ENCODE measurements at regions of chr1 and their contacts with region 1.

Region 1: GRCh38 chr1:94679336-94680038 is 137.9 kb upstream of the F3 start:
- DNase-seq: no peak
- H3K4me3 ChIP-seq: no peak overlapping the region
- CTCF ChIP-seq: no peak

Region 2: GRCh38 chr1:94589728-94590127 is 89.8 kb before region 1 on chr1:
- in situ Hi-C with region 1: loop called (anchors 5 kb)
- DNase-seq: no peak
- H3K4me3 ChIP-seq: no peak overlapping the region
- CTCF ChIP-seq: no peak

Region 3: GRCh38 chr1:94600556-94600955 is 78.9 kb before region 1 on chr1:
- in situ Hi-C with region 1: no loop called
- DNase-seq: no peak
- H3K4me3 ChIP-seq: no peak overlapping the region
- CTCF ChIP-seq: no peak

Region 4: DNA sequence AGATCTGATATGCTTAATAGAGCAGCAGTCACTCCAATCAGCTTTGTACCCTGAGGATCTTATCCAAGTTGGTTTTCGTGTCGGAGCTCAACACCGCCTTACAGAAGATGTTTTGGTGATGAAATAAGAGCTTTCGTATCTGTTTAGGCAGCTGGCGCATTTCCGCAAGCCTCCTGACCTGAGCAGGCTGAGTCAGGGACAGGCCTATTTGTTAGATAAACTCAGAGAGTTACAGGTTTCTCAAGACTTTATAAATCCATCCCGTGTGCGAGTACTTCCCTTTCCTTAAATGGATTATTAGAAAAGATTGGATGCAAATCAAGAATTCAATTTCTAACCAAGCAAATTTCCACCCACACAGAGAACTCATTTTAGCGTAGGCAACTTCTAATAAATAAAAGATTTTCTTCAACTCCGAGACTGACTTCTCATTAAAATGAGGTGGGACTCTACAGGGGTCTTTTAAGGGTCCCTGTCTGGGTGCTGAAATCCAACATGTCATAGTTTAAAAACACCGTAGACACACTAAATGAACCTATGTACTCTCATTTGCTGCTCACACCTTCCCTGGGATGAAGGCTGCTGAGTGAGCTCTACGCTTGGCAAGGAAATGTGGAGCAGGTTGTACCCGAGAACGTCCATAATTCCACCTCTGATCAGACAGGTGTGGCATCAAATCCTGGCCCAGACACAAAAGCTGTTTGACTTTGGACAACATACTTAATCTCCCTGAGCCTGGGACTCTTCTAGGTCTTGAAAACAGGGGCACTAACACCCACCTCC is 31.1 kb before region 1 on chr1:
- in situ Hi-C with region 1: loop called (anchors 5 kb)
- DNase-seq: peak; percentile 92
- H3K4me3 ChIP-seq: no peak overlapping the region
- CTCF ChIP-seq: no peak

Region 5: DNA sequence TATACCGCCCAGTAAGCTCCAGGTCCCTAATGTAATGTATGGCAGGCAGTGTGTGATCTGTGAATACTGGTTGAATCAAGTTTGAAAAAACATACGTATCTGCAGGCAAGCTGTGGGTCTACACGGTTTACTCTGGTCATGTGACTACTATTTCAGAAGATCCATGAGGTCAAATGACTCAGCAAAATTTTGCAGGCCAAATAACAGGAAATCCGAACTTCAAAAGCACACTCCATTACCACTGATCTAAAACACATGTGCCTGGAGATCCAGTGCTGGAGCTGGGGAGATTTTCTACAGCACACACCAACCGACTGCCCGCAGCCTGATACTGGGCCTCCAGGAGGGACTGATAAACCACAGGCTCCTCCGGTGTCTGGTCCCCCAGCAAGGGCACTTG is 76.2 kb after region 1 on chr1:
- in situ Hi-C with region 1: no loop called
- DNase-seq: peak; percentile 97
- H3K4me3 ChIP-seq: no peak overlapping the region
- CTCF ChIP-seq: no peak